ENCODE measurements at regions of chr2 and their contacts with region 1.

Region 1: GRCh38 chr2:3277470-3278255 is 100.0 kb downstream of the EIPR1 start:
- DNase-seq: peak in 1 of 5 donors; percentile 9
- ATAC-seq: no peak
- H3K4me3 ChIP-seq: no peak overlapping the region
- H3K27ac ChIP-seq: no peak overlapping the region
- H3K4me1 ChIP-seq: no peaks in the 10 kb centered on the region
- H3K27me3 ChIP-seq: no peaks in the 10 kb centered on the region
- CTCF ChIP-seq: no peak
- POLR2A ChIP-seq: no peak

Region 2: DNA sequence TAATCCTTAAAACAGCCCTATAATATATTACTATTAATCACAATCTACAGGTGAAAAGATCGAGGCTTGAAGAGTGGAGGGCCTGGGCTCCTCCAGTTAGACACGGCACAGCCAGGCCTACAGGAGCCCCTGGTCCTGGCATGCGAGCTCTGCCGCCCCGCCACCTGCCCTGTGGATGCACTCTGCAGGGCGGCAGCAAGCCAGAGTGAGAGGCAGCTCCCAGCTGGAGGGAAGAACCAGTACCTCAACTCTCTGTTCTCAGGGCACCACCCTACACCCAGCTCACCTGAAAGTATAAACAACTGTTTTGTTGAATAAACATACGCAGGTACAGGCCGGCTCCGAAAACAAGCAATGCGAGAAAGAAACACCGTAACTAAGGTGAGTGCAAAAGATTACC is 65.3 kb after region 1 on chr2:
- intact Hi-C with region 1: loop called in 1 of 10 experiments (anchors 2 kb)
- DNase-seq: no peak
- ATAC-seq: no peak
- H3K4me3 ChIP-seq: no peak overlapping the region
- H3K27ac ChIP-seq: no peak overlapping the region
- H3K4me1 ChIP-seq: no peaks in the 10 kb centered on the region
- H3K27me3 ChIP-seq: no peaks in the 10 kb centered on the region
- CTCF ChIP-seq: no peak
- POLR2A ChIP-seq: no peak